Lower lobe of right lung (tissue), 2 donors: ENCODE measurements at regions of chr11 and their contacts with region 1.

Region 1: DNA sequence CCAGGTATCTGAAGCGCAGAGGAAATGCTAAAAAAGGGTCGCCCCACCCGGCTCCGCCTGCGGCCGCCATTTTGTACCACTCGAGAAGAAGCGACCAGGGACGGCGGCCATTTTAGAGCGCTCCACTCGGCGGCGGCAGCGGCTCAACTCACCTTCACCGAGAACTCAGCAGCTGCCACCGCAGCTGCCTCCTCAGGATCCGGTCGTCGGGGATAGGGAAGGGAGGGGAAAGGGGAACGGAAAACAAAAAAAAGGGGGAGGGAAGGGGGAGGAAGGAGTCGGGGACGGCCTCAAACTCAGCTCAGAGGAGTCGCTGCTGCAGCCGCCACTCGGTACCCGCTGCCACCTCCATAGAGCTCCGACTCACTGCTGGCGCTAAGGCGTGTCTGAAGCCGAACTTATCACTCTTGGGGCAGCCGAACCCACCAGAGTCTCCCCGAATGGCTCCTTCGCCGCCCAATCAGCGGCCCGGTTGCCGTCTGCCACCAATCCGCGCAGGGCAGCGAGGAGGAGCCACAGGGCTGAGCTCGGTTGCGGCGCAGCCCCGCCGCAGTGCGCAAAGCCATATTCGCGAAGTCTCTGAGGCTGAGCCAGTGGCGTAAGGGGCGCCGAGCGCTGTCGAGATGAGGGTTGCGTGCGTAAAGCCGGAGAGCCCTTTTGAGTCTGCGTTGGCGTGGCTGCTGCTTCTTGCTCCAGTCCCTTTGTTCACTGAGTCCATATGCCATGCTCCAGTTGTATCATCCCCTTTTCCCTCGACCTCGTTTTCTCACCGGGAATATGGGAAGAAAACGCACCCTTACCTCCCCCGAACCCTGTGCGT is at the start of gene EIF4G2:
- DNase-seq: peak; percentile 99
- ATAC-seq: peak; percentile 98 to 99
- H3K4me3 ChIP-seq: peak within 1 kb of the TSS; percentile 96
- H3K27ac ChIP-seq: peak within 1 kb of the TSS; percentile 100
- H3K4me1 ChIP-seq: peaks cover 35% of the 10 kb centered on the region
- H3K27me3 ChIP-seq: no peaks in the 10 kb centered on the region
- CTCF ChIP-seq: peak; percentile 7
- total RNA-seq, gene EIF4G2: 778 TPM

Region 2: GRCh38 chr11:10857709-10858438 is 49.1 kb after region 1 on chr11 and contains the start of gene ZBED5:
- intact Hi-C with region 1: loop called (anchors 10 kb)
- DNase-seq: peak; percentile 97
- ATAC-seq: peak; percentile 98
- H3K4me3 ChIP-seq: peak within 1 kb of the TSS; percentile 80
- H3K27ac ChIP-seq: peak within 1 kb of the TSS; percentile 96
- H3K4me1 ChIP-seq: peaks cover 31% of the 10 kb centered on the region
- H3K27me3 ChIP-seq: no peaks in the 10 kb centered on the region
- CTCF ChIP-seq: peak; percentile 30
- total RNA-seq, gene ZBED5: 45.5 TPM